ENCODE measurements at regions of chrX and their contacts with region 1.

Region 1: DNA sequence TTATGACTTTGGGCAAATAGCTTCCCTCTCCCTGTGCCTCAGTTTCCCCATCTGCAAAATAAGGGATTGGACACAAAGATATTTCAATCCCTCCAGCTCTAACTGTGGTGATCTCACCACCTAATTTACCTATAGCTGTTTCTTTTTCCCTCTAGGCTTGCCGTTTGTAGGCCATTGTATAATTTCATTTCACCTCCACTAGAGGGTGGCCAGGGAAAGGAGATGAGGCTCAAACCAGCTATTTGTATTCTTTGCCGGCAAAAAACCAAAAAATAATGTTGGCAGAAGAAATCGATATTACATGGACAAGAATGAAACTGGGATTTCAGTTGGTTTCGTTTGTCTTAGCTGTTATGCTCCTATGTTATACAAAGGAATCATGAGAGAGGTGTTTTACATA is 36.1 kb upstream of the DOCK11 start:
- DNase-seq: peak in 1 of 3 donors; percentile 1
- ATAC-seq: peak; percentile 31
- H3K4me3 ChIP-seq: no peak overlapping the region
- H3K4me1 ChIP-seq: no peaks in the 10 kb centered on the region
- CTCF ChIP-seq: no peak

Region 2: GRCh38 chrX:118603981-118604380 is 144.5 kb after region 1 on chrX:
- intact Hi-C with region 1: loop called in 1 of 2 experiments (anchors 10 kb)
- DNase-seq: peak in 1 of 3 donors; percentile 20
- ATAC-seq: peak; percentile 74
- H3K4me3 ChIP-seq: no peak overlapping the region
- H3K4me1 ChIP-seq: no peaks in the 10 kb centered on the region
- CTCF ChIP-seq: peak; percentile 47